WTC11 (cell line): ENCODE measurements at regions of chr1 and their contacts with region 1.

Region 1: GRCh38 chr1:43358746-43359693 is at the start of gene CDC20:
- DNase-seq: peak; percentile 100
- ATAC-seq: peak; percentile 97
- H3K4me3 Mint-ChIP-seq: peak within 1 kb of the TSS; percentile 93
- H3K27ac Mint-ChIP-seq: peak within 1 kb of the TSS; percentile 99
- H3K4me1 Mint-ChIP-seq: peaks cover 29% of the 10 kb centered on the region
- H3K27me3 Mint-ChIP-seq: no peaks in the 10 kb centered on the region
- CTCF ChIP-seq: no peak
- total RNA-seq, gene CDC20: 246 to 280 TPM (median 265 TPM) in 3 replicates

Region 2: DNA sequence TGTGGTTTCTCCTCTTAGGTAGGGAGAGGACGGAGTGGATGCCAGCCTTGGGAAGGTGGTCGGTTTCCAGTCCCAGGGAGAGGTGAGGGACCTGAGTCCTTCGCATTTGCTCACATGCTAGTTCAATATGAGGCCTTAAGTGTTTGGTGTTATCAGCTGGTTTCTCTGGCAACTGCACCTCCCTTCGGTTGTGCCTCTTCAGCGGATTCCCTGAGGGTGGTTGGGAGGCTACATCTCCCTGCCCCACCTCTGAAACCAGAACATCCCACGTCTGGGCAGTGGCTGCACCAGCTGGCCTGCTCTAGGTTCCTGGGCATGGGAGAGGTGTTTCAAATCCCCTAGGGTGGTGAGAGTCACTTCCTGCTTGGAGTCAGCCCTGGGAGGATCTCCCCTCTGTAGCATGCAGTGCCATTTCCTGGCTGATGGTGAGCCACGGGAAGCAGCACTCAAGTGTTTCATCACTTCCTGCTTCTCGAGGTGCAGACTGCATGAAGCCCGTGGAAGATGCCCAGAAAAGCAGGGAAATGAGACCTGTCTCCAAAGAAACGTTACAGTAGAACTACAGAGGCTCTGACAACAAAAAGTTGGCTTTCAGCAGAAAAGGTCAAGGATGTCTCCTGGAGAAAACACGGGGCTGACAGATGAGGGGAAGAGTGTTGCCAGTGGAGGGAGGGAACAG is 84.8 kb before region 1 on chr1:
- CTCF ChIA-PET with region 1: interaction called, 10 read pairs
- POLR2A ChIA-PET with region 1: interaction called, 15 read pairs
- DNase-seq: no peak
- ATAC-seq: no peak
- H3K4me3 Mint-ChIP-seq: no peak overlapping the region
- H3K27ac Mint-ChIP-seq: no peak overlapping the region
- H3K4me1 Mint-ChIP-seq: peaks cover 28% of the 10 kb centered on the region
- H3K27me3 Mint-ChIP-seq: no peaks in the 10 kb centered on the region
- CTCF ChIP-seq: no peak

Region 3: GRCh38 chr1:43293896-43294760 is 64.9 kb before region 1 on chr1:
- CTCF ChIA-PET with region 1: interaction called, 12 read pairs
- POLR2A ChIA-PET with region 1: interaction called, 4 read pairs
- DNase-seq: no peak
- ATAC-seq: no peak
- H3K4me3 Mint-ChIP-seq: no peak overlapping the region
- H3K27ac Mint-ChIP-seq: no peak overlapping the region
- H3K4me1 Mint-ChIP-seq: peaks cover 34% of the 10 kb centered on the region
- H3K27me3 Mint-ChIP-seq: no peaks in the 10 kb centered on the region
- CTCF ChIP-seq: no peak

Region 4: GRCh38 chr1:43348809-43349583 is 10.0 kb before region 1 on chr1:
- CTCF ChIA-PET with region 1: interaction called, 22 read pairs
- POLR2A ChIA-PET with region 1: interaction called, 21 read pairs
- DNase-seq: peak; percentile 97
- ATAC-seq: peak; percentile 89
- H3K4me3 Mint-ChIP-seq: peak overlapping the region; percentile 72
- H3K27ac Mint-ChIP-seq: peak overlapping the region; percentile 95
- H3K4me1 Mint-ChIP-seq: peaks cover 25% of the 10 kb centered on the region
- H3K27me3 Mint-ChIP-seq: peaks cover 16% of the 10 kb centered on the region
- CTCF ChIP-seq: no peak

Region 5: GRCh38 chr1:43414634-43415223 is 55.7 kb after region 1 on chr1:
- CTCF ChIA-PET with region 1: interaction called, 25 read pairs
- POLR2A ChIA-PET with region 1: interaction called, 7 read pairs
- DNase-seq: peak; percentile 81
- ATAC-seq: peak; percentile 98
- H3K4me3 Mint-ChIP-seq: no peak overlapping the region
- H3K27ac Mint-ChIP-seq: no peak overlapping the region
- H3K4me1 Mint-ChIP-seq: no peaks in the 10 kb centered on the region
- H3K27me3 Mint-ChIP-seq: no peaks in the 10 kb centered on the region
- CTCF ChIP-seq: peak; percentile 58